ENCODE measurements at regions of chr1 and their contacts with region 1.

Region 1: GRCh38 chr1:182084487-182085316 is 23.2 kb upstream of the ZNF648 start:
- DNase-seq: peak; percentile 86
- H3K4me3 Mint-ChIP-seq: no peak overlapping the region
- H3K27ac Mint-ChIP-seq: peak overlapping the region; percentile 80
- H3K4me1 Mint-ChIP-seq: peaks cover 54% of the 10 kb centered on the region
- H3K27me3 Mint-ChIP-seq: no peaks in the 10 kb centered on the region

Region 2: DNA sequence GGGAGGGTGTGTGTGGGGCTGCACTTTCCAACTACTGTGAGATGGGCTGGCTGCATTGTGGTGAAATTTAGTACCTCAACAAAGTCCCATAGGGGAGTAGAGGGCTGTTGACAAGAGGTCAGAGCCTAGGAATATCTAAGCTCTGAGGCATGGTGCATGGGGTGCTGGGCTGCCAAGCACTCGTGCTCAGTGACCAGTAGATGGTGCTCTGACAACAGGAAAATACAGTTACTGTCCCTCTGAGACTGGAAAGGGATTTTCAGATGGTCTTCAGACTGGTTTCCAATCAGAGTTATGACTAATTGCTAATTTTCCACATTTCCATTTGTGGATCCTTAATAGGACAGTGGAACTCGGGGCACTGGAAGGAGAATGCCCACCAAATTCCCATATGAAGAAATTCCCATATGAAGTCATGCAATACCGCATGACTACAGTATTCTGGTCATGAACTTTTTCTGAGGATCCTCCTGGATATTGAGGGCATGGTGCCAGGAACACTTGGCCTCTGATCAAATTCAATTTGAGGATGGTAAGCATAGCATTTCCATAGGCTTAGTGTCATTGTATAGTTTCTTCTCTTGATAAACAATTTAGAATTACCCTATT is 605.5 kb before region 1 on chr1:
- CTCF ChIA-PET with region 1: interaction called, 10 read pairs
- POLR2A ChIA-PET with region 1: no interaction called
- DNase-seq: peak; percentile 44
- H3K4me3 Mint-ChIP-seq: no peak overlapping the region
- H3K27ac Mint-ChIP-seq: no peak overlapping the region
- H3K4me1 Mint-ChIP-seq: peaks cover 11% of the 10 kb centered on the region
- H3K27me3 Mint-ChIP-seq: peaks cover 49% of the 10 kb centered on the region

Region 3: GRCh38 chr1:182397771-182398393 is 313.2 kb after region 1 on chr1:
- CTCF ChIA-PET with region 1: interaction called, 51 read pairs
- POLR2A ChIA-PET with region 1: interaction called, 5 read pairs
- DNase-seq: no peak
- H3K4me3 Mint-ChIP-seq: no peak overlapping the region
- H3K27ac Mint-ChIP-seq: no peak overlapping the region
- H3K4me1 Mint-ChIP-seq: peaks cover 8% of the 10 kb centered on the region
- H3K27me3 Mint-ChIP-seq: peaks cover 13% of the 10 kb centered on the region